CD4-positive, alpha-beta T cell (primary cell): ENCODE measurements at regions of chr22 and their contacts with region 1.

Region 1: GRCh38 chr22:41697126-41697775 is 2.1 kb upstream of the MEI1 start:
- DNase-seq: peak; percentile 84 to 98 (median 92)
- ATAC-seq: peak; percentile 78
- H3K4me3 ChIP-seq: peak overlapping the region; percentile 24
- H3K4me3 Mint-ChIP-seq: peak overlapping the region; percentile 59
- H3K27ac ChIP-seq: no peak overlapping the region
- H3K27ac Mint-ChIP-seq: no peak overlapping the region
- H3K4me1 ChIP-seq: peaks cover 24% of the 10 kb centered on the region
- H3K4me1 Mint-ChIP-seq: peaks cover 12% of the 10 kb centered on the region
- H3K27me3 ChIP-seq: no peaks in the 10 kb centered on the region
- H3K27me3 Mint-ChIP-seq: no peaks in the 10 kb centered on the region
- CTCF ChIP-seq: peak; percentile 98

Region 2: GRCh38 chr22:41713004-41713403 is 15.8 kb after region 1 on chr22:
- CTCF ChIA-PET with region 1: interaction called, 12 read pairs
- POLR2A ChIA-PET with region 1: interaction called, 8 read pairs
- intact Hi-C with region 1: no loop called
- DNase-seq: no peak
- ATAC-seq: no peak
- H3K4me3 ChIP-seq: no peak overlapping the region
- H3K4me3 Mint-ChIP-seq: no peak overlapping the region
- H3K27ac ChIP-seq: no peak overlapping the region
- H3K27ac Mint-ChIP-seq: no peak overlapping the region
- H3K4me1 ChIP-seq: no peaks in the 10 kb centered on the region
- H3K4me1 Mint-ChIP-seq: no peaks in the 10 kb centered on the region
- H3K27me3 ChIP-seq: no peaks in the 10 kb centered on the region
- H3K27me3 Mint-ChIP-seq: no peaks in the 10 kb centered on the region
- CTCF ChIP-seq: no peak

Region 3: DNA sequence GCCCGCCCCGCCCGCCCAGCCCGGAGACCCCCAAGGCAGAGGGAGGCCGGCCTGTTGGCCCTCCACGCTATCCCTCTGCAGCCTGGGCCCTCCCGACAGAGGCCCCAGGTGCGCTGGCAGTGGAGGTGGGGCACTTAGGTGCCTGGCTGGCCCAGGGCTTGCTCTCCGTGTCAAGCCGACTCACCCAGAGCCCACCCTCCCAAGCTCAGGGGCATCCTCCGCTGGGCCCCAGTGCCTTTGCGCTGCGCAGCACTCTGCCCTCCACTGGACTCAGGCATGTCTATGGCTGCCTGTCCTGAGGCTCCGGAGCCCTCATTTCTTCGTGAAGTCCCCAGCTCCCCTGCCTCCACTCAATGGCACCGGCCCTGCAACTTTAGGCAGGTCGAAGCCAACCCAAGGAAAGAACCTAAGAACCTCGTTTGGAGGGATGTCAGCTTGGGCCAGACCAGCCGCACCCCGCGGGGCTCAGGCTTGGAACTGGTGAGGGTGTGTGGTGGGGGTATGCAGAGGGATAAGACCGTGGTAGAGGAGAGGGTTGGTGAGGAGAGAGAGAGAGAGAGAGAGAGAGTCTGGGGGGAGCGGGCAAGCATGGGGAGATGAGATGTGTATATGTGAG is 260.8 kb after region 1 on chr22:
- CTCF ChIA-PET with region 1: interaction called, 3 read pairs
- POLR2A ChIA-PET with region 1: no interaction called
- intact Hi-C with region 1: loop called in 1 of 2 experiments (anchors 5 kb)
- DNase-seq: no peak
- ATAC-seq: peak; percentile 39
- H3K4me3 ChIP-seq: no peak overlapping the region
- H3K4me3 Mint-ChIP-seq: no peak overlapping the region
- H3K27ac ChIP-seq: no peak overlapping the region
- H3K27ac Mint-ChIP-seq: no peak overlapping the region
- H3K4me1 ChIP-seq: peaks cover 14% of the 10 kb centered on the region
- H3K4me1 Mint-ChIP-seq: peaks cover 4% of the 10 kb centered on the region
- H3K27me3 ChIP-seq: no peaks in the 10 kb centered on the region
- H3K27me3 Mint-ChIP-seq: no peaks in the 10 kb centered on the region
- CTCF ChIP-seq: peak; percentile 60